CD4-positive, alpha-beta T cell (primary cell): ENCODE measurements at regions of chr2 and their contacts with region 1.

Region 1: DNA sequence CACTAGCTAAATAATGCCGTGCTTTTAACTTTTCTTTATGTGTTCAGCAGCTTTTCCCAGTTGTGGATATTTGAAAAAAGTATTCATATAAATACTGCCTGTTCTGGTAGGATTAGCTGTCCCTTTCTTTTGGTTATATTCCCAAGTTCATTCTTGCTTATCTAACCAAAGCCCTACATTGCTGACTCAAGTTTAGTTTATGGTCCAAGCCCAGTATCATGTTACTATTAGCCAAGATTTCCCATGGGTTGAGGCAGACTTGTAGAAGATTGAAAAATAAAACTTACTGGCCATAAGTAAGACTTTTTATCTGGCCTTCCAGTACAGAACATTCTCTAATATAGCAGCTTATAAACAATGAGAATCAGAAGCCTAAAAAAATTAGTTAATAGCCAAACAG is 49.7 kb upstream of the NFE2L2 start:
- DNase-seq: no peak
- ATAC-seq: no peak
- H3K4me3 ChIP-seq: no peak overlapping the region
- H3K4me3 Mint-ChIP-seq: no peak overlapping the region
- H3K27ac ChIP-seq: no peak overlapping the region
- H3K27ac Mint-ChIP-seq: peak overlapping the region; percentile 90
- H3K4me1 ChIP-seq: peaks cover 19% of the 10 kb centered on the region
- H3K4me1 Mint-ChIP-seq: peaks cover 38% of the 10 kb centered on the region
- H3K27me3 ChIP-seq: no peaks in the 10 kb centered on the region
- H3K27me3 Mint-ChIP-seq: no peaks in the 10 kb centered on the region
- CTCF ChIP-seq: no peak

Region 2: DNA sequence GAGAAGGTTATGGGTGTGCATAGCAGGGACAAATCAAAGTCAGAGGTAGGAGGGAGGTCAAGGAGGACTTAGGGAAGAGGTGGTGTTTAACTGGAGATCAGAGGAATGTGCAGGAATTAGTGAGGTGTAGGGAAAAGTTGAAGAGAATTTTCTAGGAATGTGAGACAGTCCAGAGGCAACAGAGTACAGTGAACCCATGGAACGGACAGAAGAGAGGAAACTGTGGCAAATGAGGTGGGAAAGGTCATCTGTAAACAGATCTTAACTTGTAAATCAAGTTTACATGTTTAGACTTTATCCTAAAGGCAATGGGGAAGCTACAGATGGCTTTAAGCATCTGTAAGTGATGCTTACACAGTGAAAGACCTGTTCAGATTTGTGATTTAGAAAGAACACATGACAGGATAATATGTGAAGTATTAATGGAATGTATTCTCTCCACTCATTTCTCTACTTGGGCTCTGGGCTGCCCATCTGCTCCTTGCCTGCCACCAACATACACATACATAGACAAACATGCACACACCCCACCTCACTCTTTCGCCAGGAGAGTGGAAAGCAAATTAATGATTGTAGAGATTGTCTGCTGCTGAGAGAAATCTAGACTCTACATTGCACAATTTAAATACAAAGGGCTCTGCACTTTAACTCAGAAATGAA is 11.2 kb after region 1 on chr2:
- CTCF ChIA-PET with region 1: no interaction called
- POLR2A ChIA-PET with region 1: interaction called, 14 read pairs
- intact Hi-C with region 1: no loop called
- DNase-seq: no peak
- ATAC-seq: no peak
- H3K4me3 ChIP-seq: no peak overlapping the region
- H3K4me3 Mint-ChIP-seq: no peak overlapping the region
- H3K27ac ChIP-seq: no peak overlapping the region
- H3K27ac Mint-ChIP-seq: no peak overlapping the region
- H3K4me1 ChIP-seq: peaks cover 14% of the 10 kb centered on the region
- H3K4me1 Mint-ChIP-seq: no peaks in the 10 kb centered on the region
- H3K27me3 ChIP-seq: no peaks in the 10 kb centered on the region
- H3K27me3 Mint-ChIP-seq: no peaks in the 10 kb centered on the region
- CTCF ChIP-seq: no peak

Region 3: DNA sequence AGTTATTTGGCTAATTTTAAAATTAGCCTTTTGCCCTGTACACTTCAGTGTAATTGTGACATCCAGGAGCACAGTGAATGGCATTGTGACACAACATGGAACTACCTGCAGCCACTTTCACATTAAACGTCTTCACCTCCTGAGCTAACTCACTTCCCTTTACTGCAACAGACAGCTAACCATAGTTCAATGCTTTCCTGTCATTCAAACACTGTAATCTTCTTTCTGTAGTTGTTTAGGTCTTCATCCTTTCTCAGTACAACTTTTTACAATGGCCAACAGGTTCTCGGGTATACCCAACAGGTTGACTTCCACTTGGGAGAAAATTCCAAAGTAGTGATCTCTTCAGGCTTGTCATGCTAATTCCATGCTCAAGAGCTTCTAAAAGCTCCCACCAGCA is 69.7 kb after region 1 on chr2:
- CTCF ChIA-PET with region 1: no interaction called
- POLR2A ChIA-PET with region 1: no interaction called
- intact Hi-C with region 1: no loop called
- DNase-seq: no peak
- ATAC-seq: no peak
- H3K4me3 ChIP-seq: no peak overlapping the region
- H3K4me3 Mint-ChIP-seq: no peak overlapping the region
- H3K27ac ChIP-seq: no peak overlapping the region
- H3K27ac Mint-ChIP-seq: no peak overlapping the region
- H3K4me1 ChIP-seq: no peaks in the 10 kb centered on the region
- H3K4me1 Mint-ChIP-seq: no peaks in the 10 kb centered on the region
- H3K27me3 ChIP-seq: no peaks in the 10 kb centered on the region
- H3K27me3 Mint-ChIP-seq: no peaks in the 10 kb centered on the region
- CTCF ChIP-seq: no peak

Region 4: GRCh38 chr2:178090483-178090882 is 776.3 kb after region 1 on chr2:
- CTCF ChIA-PET with region 1: no interaction called
- POLR2A ChIA-PET with region 1: no interaction called
- intact Hi-C with region 1: no loop called
- DNase-seq: no peak
- ATAC-seq: no peak
- H3K4me3 ChIP-seq: no peak overlapping the region
- H3K4me3 Mint-ChIP-seq: no peak overlapping the region
- H3K27ac ChIP-seq: no peak overlapping the region
- H3K27ac Mint-ChIP-seq: no peak overlapping the region
- H3K4me1 ChIP-seq: no peaks in the 10 kb centered on the region
- H3K4me1 Mint-ChIP-seq: no peaks in the 10 kb centered on the region
- H3K27me3 ChIP-seq: peaks cover 0 to 6% of the 10 kb centered on the region in 2 experiments
- H3K27me3 Mint-ChIP-seq: peaks cover 14% of the 10 kb centered on the region
- CTCF ChIP-seq: no peak